OCI-LY7 (cell line): ENCODE measurements at regions of chr2 and their contacts with region 1.

Region 1: DNA sequence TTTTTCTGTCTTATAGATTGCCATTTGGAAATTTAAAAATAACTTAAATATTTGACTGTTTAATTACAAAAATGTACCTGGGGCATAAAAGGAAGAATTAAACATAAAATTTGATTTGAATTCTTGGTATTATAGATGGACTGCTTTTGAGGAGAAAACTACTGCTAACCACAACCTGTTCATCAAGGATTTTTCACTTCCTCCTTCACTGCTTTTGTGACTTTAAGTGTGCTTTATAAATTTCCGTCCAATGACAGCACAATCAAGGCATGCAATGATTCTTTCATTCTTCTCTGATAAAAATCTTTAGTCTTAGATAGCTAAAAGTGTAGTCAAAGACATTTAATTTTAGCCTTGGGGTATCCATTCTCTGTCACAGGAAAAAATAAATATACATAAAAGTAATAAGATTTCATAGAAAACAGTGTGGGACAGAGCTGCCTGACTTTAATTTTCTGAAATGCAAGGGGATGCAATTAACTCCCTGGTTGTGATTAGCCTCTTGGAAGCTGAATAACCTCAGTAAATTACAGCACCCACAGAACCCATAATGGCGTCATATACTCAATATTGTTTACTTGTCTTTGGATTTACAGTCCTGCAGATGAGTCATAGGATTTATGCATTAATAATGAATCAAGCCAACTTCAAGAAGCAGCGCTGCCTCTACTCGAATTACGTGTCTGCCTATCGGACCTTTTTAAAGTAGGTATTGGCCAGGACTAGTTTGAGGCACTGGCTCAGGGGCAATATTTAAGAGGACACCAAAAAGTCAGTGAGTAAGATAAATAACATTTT is 587.9 kb downstream of the NRXN1 start:
- DNase-seq: no peak
- H3K4me3 ChIP-seq: no peak overlapping the region
- H3K27ac ChIP-seq: no peak overlapping the region
- H3K4me1 ChIP-seq: no peaks in the 10 kb centered on the region
- CTCF ChIP-seq: no peak

Region 2: DNA sequence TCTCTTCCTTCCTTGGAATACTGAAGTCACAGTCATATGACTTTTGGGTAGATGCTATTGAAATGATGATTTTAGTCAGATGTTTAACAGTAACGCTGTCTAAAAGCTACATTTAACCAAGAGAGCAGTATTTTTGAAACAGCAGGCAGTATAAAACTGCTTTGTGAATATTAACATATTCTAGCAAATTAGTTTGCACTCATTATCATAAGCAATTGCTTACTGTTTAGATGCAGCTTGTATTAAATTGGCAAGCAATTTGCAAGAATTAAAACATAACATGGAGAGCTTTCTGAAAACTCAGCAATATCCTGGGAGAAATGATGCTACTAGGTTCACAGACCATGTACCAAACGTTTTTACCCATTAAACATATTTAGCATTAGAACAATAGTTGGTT is 188.1 kb before region 1 on chr2:
- CTCF ChIA-PET with region 1: no interaction called
- POLR2A ChIA-PET with region 1: no interaction called
- intact Hi-C with region 1: no loop called
- DNase-seq: no peak
- H3K4me3 ChIP-seq: no peak overlapping the region
- H3K27ac ChIP-seq: no peak overlapping the region
- H3K4me1 ChIP-seq: no peaks in the 10 kb centered on the region
- CTCF ChIP-seq: no peak

Region 3: DNA sequence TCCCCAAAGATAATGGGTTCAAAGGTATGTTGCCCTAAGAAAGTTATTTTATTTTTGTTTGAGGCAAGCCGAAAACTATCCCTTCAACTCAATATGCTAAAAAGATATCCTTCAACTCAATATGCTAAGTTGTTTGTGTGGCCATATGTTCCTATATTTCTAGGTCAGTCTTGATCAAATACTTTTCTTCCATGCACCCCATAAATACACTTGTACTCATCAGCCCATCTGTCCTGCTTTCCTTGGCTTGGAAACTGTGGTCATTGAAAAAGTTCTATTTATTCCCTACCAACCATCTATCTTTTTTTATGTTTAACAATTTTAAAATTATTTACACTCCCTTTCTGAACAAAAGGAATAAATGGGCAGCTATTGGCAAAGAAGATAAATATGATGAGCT is 140.1 kb after region 1 on chr2:
- CTCF ChIA-PET with region 1: no interaction called
- POLR2A ChIA-PET with region 1: interaction called, 14 read pairs
- intact Hi-C with region 1: no loop called
- DNase-seq: no peak
- H3K4me3 ChIP-seq: no peak overlapping the region
- H3K27ac ChIP-seq: no peak overlapping the region
- H3K4me1 ChIP-seq: no peaks in the 10 kb centered on the region
- CTCF ChIP-seq: no peak

Region 4: DNA sequence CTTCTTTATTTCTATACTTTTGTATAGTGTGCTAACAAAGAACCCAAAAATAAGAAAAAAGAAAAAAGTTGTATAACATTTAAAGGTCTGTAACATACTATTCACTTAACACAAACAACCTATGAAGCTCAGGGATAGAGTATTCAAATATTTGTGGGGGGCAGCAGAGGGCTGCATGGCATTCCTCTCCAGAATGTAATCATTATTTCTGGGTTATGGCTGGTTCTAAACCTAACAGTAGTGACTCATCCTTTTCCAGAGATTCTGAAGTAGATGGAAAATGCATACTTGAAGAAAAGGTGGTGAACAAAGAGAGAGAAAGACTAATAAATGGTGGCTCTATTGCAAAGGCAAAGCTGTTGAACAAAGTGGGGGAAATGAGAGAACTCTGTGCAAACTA is 338.5 kb after region 1 on chr2:
- CTCF ChIA-PET with region 1: no interaction called
- POLR2A ChIA-PET with region 1: no interaction called
- intact Hi-C with region 1: no loop called
- DNase-seq: no peak
- H3K4me3 ChIP-seq: no peak overlapping the region
- H3K27ac ChIP-seq: no peak overlapping the region
- H3K4me1 ChIP-seq: no peaks in the 10 kb centered on the region
- CTCF ChIP-seq: no peak